Right ventricle myocardium inferior (tissue), 1 donor: ENCODE measurements at regions of chr11 and their contacts with region 1.

Region 1: GRCh38 chr11:62726915-62727763 is at the start of gene HNRNPUL2:
- DNase-seq: peak; percentile 99
- ATAC-seq: peak; percentile 94
- total RNA-seq, gene HNRNPUL2: 33.8 TPM

Region 2: GRCh38 chr11:62665075-62665598 is 62.0 kb before region 1 on chr11 and contains the starts of genes C11orf98 and CSKMT:
- intact Hi-C with region 1: loop called (anchors 5 kb)
- DNase-seq: peak; percentile 98
- ATAC-seq: peak; percentile 98
- total RNA-seq, gene C11orf98: 33.0 TPM
- total RNA-seq, gene CSKMT: 4.9 TPM

Region 3: GRCh38 chr11:62705880-62706849 is 21.0 kb before region 1 on chr11:
- intact Hi-C with region 1: loop called (anchors 2 kb)
- DNase-seq: peak; percentile 98
- ATAC-seq: peak; percentile 88

Region 4: GRCh38 chr11:62753736-62754603 is 26.8 kb after region 1 on chr11 and contains the start of gene ZBTB3:
- intact Hi-C with region 1: loop called (anchors 1 kb)
- DNase-seq: peak; percentile 98
- ATAC-seq: peak; percentile 98
- total RNA-seq, gene ZBTB3: 11.5 TPM

Region 5: DNA sequence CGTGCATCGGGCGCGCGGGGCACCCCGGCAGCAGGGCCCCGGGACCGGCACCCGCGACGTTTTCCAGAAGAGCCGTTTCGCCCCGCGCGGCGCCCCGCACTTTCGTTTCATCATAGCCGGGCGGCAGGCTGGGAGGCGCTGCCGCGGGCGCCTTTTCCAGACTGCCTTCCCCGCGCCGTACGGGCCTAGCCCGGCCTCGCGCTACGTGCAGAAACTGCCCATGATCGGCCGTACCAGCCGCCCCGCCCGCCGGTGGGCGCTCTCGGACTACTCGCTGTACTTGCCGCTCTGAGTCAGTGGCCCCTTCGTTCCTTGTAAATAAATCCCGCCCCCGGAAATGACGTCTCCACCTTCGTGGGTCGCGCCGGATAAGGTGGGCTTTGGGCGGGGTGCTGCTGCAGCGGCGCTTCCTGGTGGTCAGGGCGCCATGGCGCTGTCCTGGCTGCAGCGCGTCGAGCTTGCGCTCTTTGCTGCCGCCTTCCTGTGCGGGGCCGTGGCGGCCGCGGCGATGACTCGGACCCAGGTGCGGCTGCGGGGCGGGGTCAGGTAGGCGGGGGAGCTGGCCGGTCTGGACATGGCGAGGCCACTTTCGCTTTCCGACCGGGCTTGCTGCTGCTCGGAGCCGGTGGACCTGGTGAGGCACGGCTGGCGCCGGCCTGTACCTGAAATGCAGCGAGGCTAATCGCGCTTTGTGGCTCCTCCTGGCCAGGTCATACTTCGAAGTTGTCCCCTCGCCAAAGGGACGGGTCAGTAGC is 60.0 kb after region 1 on chr11 and contains the start of gene TMEM179B:
- intact Hi-C with region 1: loop called (anchors 2 kb)
- DNase-seq: peak; percentile 99
- ATAC-seq: peak; percentile 88
- total RNA-seq, gene TMEM179B: 21.6 TPM

Region 6: GRCh38 chr11:62831520-62832335 is 104.6 kb after region 1 on chr11 and contains the start of gene STX5:
- intact Hi-C with region 1: loop called (anchors 5 kb)
- DNase-seq: peak; percentile 100
- ATAC-seq: peak; percentile 99
- total RNA-seq, gene STX5: 18.5 TPM

Region 7: DNA sequence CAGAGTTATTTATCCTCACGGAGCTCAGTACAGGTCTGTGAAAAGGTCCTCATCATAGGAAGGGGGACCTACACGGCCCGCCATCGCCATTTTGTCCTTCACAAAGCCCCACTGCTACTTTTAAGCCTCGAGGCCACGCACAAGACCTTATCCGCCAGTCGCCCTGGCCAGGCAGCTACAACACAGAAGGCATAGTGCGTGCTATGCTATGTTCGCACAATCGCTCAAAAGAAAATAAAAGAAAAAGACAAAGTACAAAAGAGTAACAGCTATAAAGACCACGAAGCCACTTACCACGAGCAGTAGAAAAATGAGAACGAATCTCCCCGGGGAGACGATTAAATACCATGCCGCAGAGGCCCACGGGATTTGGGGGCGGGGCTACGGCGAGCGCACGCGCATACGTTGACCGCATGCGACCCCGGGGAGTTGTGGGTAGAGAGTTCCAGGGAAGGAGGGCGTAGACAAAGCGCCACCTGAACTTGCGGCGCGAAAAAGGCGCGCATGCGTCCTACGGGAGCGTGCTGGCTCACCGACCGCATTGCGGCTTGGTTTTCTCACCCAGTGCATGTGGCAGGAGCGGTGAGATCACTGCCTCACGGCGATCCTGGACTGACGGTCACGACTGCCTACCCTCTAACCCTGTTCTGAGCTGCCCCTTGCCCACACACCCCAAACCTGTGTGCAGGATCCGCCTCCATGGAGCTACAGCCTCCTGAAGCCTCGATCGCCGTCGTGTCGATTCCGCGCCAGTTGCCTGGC is 128.6 kb after region 1 on chr11:
- intact Hi-C with region 1: loop called (anchors 5 kb)
- DNase-seq: peak; percentile 96
- ATAC-seq: peak; percentile 99

Region 8: GRCh38 chr11:62999649-63000048 is 272.5 kb after region 1 on chr11:
- intact Hi-C with region 1: no loop called
- DNase-seq: no peak
- ATAC-seq: no peak